B cell (primary cell): ENCODE measurements at regions of chr3 and their contacts with region 1.

Region 1: DNA sequence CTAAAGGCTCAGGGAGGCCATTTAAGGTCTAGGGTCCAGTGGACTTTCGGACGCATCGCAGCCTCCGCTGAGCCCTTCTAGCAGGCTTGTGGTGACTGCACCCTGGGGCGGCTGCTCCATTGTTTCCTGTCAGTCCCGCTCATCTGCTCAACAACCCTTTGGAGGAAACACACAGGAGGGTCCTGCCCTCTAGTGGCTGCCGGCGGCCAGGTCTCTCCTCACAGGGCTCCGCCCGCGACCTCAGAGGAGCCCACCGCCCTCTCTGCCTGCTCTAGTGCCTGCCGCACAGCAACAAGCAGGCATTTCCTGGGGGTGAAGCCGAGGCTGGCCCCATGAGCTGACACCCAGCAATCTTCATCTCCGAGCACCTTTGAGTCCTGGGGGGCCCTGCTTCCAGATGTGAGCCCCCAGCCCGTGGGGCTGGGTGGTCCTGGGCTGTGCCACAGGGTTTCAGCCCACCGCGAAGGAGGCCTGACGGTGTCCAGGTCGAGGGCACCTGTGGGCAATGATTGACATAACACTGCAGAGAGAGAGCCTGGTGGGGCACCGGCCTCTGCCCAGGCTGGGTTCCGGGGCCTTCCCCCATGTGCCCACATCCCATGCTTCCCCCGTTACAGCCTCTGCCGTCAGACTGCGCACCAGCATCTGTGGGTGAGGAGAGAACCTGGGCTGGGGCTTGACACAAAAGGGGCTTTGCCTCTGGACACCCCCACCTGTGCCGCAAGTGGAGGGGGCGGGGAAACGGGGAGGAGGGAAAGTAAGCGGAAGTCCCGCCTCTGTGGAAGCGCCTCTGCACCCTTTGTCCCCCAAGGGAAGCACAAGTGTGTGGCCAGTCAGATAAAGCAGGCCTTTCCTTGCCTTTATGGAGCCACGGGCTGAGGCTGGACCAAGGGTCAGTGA is 27.0 kb upstream of the SFMBT1 start:
- DNase-seq: peak; percentile 86
- ATAC-seq: peak; percentile 91
- H3K4me3 ChIP-seq: peak overlapping the region; percentile 50 to 91 (median 80)
- H3K4me3 Mint-ChIP-seq: peak overlapping the region; percentile 95
- H3K27ac ChIP-seq: peak overlapping the region; percentile 34 to 76
- H3K27ac Mint-ChIP-seq: peak overlapping the region; percentile 90
- H3K4me1 ChIP-seq: peaks cover 12 to 21% of the 10 kb centered on the region in 2 donors
- H3K4me1 Mint-ChIP-seq: peaks cover 17% of the 10 kb centered on the region
- H3K27me3 ChIP-seq: no peaks in the 10 kb centered on the region
- H3K27me3 Mint-ChIP-seq: no peaks in the 10 kb centered on the region
- CTCF ChIP-seq: peak; percentile 96

Region 2: GRCh38 chr3:52705688-52706686 is 366.9 kb before region 1 on chr3 and contains the starts of genes GLT8D1 and SPCS1:
- CTCF ChIA-PET with region 1: no interaction called
- POLR2A ChIA-PET with region 1: no interaction called
- intact Hi-C with region 1: loop called (anchors 1 kb)
- DNase-seq: peak; percentile 97
- ATAC-seq: peak; percentile 86
- H3K4me3 ChIP-seq: peak within 1 kb of the TSS; percentile 75 to 91 (median 82)
- H3K4me3 Mint-ChIP-seq: peak within 1 kb of the TSS; percentile 96
- H3K27ac ChIP-seq: peak within 1 kb of the TSS; percentile 66 to 95
- H3K27ac Mint-ChIP-seq: peak within 1 kb of the TSS; percentile 97
- H3K4me1 ChIP-seq: peaks cover 40 to 44% of the 10 kb centered on the region in 2 donors
- H3K4me1 Mint-ChIP-seq: peaks cover 46% of the 10 kb centered on the region
- H3K27me3 ChIP-seq: no peaks in the 10 kb centered on the region
- H3K27me3 Mint-ChIP-seq: no peaks in the 10 kb centered on the region
- CTCF ChIP-seq: no peak
- total RNA-seq, gene GLT8D1: 28.7 and 32.5 TPM in 2 replicates
- total RNA-seq, gene SPCS1: 54.3 and 64.5 TPM in 2 replicates

Region 3: DNA sequence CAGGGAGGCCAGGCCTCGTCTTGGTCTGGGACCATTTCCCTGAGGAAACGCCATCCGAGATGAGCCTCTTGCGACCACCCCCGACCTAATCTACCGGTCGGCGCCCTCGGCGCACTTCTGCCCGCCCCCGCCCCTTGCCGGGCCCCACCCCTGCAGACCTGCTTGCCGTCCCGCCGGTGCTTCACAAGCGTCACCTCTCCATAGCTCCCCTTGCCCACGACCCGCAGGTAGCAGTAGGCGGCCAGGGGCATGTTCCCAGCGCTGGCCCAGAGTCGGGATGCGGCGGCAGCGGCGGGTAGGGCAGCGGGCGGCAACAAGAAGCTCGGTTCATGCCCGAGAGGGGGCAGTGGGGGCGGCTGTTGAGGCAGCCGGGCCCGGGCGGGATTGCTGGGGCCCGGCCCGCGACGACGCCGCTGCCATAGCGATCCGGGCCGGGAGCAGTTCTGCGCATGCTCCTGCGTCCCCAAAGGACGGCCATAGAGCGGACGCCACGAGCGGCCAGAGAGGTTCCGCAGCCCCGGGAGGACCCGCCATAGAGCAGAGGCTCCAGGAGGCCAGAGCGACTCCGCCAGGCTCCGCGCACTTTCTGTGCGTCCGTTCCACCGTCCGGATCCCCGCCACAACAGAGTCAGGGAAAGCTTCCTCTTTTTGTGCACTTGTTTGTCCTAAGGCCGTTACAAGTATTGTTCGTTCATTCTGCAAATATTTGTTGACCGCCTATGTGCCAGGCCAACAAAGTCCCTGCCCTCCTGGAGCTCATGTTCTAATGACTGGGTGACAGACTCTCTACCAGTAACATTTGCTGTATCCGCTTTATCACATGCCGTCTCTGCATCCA is 302.2 kb before region 1 on chr3 and contains the start of gene NEK4:
- CTCF ChIA-PET with region 1: no interaction called
- POLR2A ChIA-PET with region 1: no interaction called
- intact Hi-C with region 1: loop called (anchors 1 kb)
- DNase-seq: peak; percentile 93
- ATAC-seq: peak; percentile 96
- H3K4me3 ChIP-seq: peak within 1 kb of the TSS; percentile 57 to 85 (median 70)
- H3K4me3 Mint-ChIP-seq: peak within 1 kb of the TSS; percentile 99
- H3K27ac ChIP-seq: peak within 1 kb of the TSS; percentile 71 to 89
- H3K27ac Mint-ChIP-seq: peak within 1 kb of the TSS; percentile 98
- H3K4me1 ChIP-seq: peaks cover 9 to 12% of the 10 kb centered on the region in 2 donors
- H3K4me1 Mint-ChIP-seq: peaks cover 18% of the 10 kb centered on the region
- H3K27me3 ChIP-seq: no peaks in the 10 kb centered on the region
- H3K27me3 Mint-ChIP-seq: no peaks in the 10 kb centered on the region
- CTCF ChIP-seq: peak; percentile 27
- total RNA-seq, gene NEK4: 33.8 and 38.4 TPM in 2 replicates

Region 4: DNA sequence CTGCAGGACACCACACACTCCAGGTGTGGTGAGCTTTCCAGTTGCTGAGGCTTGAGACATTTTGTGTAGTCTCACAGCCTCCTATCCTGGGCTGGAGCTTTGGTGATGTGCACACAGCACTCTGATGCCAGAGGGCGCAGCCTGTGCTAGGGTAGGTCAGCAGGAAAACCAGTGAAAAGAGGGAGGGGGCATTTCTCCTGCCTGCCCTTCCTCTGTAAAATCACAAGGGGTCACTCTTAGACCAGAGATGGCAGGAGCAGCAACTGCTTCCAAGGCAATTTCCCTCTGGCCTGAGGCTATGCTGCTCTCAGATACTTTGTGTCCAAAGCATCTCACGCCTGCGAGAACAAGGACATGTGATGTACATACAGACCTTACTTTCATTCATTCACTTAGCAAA is 221.6 kb before region 1 on chr3:
- CTCF ChIA-PET with region 1: interaction called, 11 read pairs
- POLR2A ChIA-PET with region 1: no interaction called
- intact Hi-C with region 1: loop called (anchors 1 kb)
- DNase-seq: peak; percentile 49
- ATAC-seq: peak; percentile 73
- H3K4me3 ChIP-seq: no peak overlapping the region
- H3K4me3 Mint-ChIP-seq: no peak overlapping the region
- H3K27ac ChIP-seq: no peak overlapping the region
- H3K27ac Mint-ChIP-seq: no peak overlapping the region
- H3K4me1 ChIP-seq: no peaks in the 10 kb centered on the region
- H3K4me1 Mint-ChIP-seq: no peaks in the 10 kb centered on the region
- H3K27me3 ChIP-seq: no peaks in the 10 kb centered on the region
- H3K27me3 Mint-ChIP-seq: no peaks in the 10 kb centered on the region
- CTCF ChIP-seq: peak; percentile 55

Region 5: GRCh38 chr3:52907497-52907896 is 165.4 kb before region 1 on chr3:
- CTCF ChIA-PET with region 1: interaction called, 14 read pairs
- POLR2A ChIA-PET with region 1: no interaction called
- intact Hi-C with region 1: loop called (anchors 1 kb)
- DNase-seq: no peak
- ATAC-seq: no peak
- H3K4me3 ChIP-seq: no peak overlapping the region
- H3K4me3 Mint-ChIP-seq: no peak overlapping the region
- H3K27ac ChIP-seq: no peak overlapping the region
- H3K27ac Mint-ChIP-seq: no peak overlapping the region
- H3K4me1 ChIP-seq: no peaks in the 10 kb centered on the region
- H3K4me1 Mint-ChIP-seq: no peaks in the 10 kb centered on the region
- H3K27me3 ChIP-seq: no peaks in the 10 kb centered on the region
- H3K27me3 Mint-ChIP-seq: no peaks in the 10 kb centered on the region
- CTCF ChIP-seq: peak; percentile 15

Region 6: DNA sequence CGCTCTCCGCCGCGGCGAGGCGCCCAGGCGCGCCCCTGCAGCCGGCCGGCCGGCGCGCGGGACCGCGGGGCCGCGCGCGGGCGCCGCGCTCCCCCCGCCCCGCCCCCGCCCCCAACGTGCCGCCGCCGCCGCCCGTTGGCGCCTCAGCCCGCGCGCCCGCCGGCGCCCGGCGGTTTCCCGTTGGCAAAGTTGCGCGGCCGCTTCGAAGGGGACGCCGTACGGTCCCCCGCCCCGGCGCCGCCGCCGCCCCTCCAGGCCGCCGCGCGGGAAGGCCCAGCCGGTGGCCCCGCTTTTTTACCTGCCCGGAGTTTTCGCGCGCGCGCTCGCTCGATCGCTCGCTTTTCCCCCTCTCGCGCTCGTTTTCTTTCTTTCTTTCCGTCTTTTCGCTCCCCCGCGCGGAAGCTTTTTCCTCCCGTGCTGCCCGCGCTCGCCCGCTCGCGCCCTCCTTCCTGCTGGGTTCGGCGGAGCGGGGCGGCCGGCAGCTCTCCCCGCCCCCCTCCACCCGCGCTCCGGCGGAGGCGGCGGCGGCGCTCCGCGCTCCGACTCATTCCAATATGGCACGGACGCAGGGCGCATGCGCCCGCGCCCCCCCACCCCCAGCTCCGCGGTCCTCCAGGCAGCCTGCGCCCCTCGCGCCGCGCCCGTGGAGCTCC is 27.3 kb before region 1 on chr3 and contains the start of gene SFMBT1:
- CTCF ChIA-PET with region 1: interaction called, 7 read pairs
- POLR2A ChIA-PET with region 1: no interaction called
- intact Hi-C with region 1: loop called (anchors 1 kb)
- DNase-seq: peak; percentile 92
- ATAC-seq: peak; percentile 51
- H3K4me3 ChIP-seq: peak within 1 kb of the TSS; percentile 41 to 94 (median 84)
- H3K4me3 Mint-ChIP-seq: peak within 1 kb of the TSS; percentile 98
- H3K27ac ChIP-seq: peak within 1 kb of the TSS; percentile 83 to 88
- H3K27ac Mint-ChIP-seq: peak within 1 kb of the TSS; percentile 99
- H3K4me1 ChIP-seq: peaks cover 19 to 30% of the 10 kb centered on the region in 2 donors
- H3K4me1 Mint-ChIP-seq: peaks cover 43% of the 10 kb centered on the region
- H3K27me3 ChIP-seq: no peaks in the 10 kb centered on the region
- H3K27me3 Mint-ChIP-seq: no peaks in the 10 kb centered on the region
- CTCF ChIP-seq: no peak
- total RNA-seq, gene SFMBT1: 55.8 and 60.3 TPM in 2 replicates

Region 7: DNA sequence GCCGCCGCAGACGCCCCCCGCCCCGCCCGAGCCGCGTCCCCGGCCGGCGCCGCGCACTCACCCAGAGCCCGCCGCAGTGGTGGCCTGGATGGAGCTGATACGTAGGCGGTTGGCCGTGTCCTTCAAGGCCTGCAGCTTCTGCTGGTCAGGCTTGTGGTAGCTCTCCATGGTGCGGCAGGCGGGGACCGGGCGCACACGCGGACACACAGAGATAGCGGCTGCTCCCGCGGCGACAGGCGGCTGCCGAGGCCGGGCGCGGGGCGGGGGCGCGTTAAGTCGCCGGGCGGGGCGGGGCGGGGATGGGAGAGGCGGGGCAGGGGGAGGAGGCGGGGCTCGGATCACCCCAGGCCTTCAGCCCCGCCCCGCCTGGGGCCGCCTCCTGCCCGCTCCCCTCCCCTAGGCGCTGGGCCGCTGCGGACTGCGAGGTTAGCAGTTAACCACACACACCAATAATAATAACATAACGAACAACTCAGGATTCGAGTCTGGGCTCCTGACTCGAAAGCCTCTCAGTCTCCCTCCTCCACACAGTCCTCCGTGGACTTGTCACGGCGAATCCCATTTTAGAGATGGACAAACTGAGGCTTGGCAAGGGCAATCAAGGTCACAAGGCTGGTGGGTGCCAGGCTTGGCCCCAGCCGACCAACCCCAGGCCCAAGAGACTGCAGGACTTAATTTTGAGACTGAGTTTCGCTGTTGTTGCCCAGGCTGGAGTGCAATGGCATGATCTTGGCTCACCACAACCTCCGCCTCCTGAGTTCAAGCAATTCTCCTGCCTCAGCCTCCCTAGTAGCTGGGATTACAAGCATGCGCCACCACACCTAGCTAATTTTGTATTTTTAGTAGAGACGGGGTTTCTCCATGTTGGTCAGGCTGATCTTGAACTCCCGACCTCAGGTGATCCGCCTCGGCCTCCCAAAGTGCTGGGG is 183.1 kb after region 1 on chr3 and contains the start of gene TKT:
- CTCF ChIA-PET with region 1: no interaction called
- POLR2A ChIA-PET with region 1: no interaction called
- intact Hi-C with region 1: loop called (anchors 2 kb)
- DNase-seq: peak; percentile 87
- ATAC-seq: peak; percentile 87
- H3K4me3 ChIP-seq: peak within 1 kb of the TSS; percentile 72 to 83 (median 75)
- H3K4me3 Mint-ChIP-seq: peak within 1 kb of the TSS; percentile 91
- H3K27ac ChIP-seq: peak within 1 kb of the TSS; percentile 50 to 63
- H3K27ac Mint-ChIP-seq: peak within 1 kb of the TSS; percentile 81
- H3K4me1 ChIP-seq: peaks cover 30 to 42% of the 10 kb centered on the region in 2 donors
- H3K4me1 Mint-ChIP-seq: peaks cover 36% of the 10 kb centered on the region
- H3K27me3 ChIP-seq: no peaks in the 10 kb centered on the region
- H3K27me3 Mint-ChIP-seq: no peaks in the 10 kb centered on the region
- CTCF ChIP-seq: no peak
- total RNA-seq, gene TKT: 81.0 and 85.8 TPM in 2 replicates

Region 8: DNA sequence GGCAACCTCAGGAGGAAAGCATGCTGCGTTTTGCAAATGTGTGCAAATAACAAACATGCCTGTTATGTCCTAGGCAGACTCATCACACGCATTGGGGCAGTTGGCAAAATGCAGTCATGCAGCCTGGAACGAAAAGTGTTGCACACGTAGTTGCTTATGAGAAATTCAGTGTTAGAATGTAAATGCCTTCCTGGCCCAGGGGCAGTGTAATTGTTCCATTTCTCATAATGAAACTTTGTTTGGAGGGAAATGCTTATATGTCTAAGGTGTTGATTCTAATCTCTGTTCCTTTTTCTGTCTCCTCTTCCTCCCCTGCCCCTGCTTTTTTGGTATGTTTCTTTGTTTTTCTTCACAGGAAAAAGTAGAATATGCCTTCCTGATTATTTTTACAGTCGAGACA is 577.5 kb after region 1 on chr3:
- CTCF ChIA-PET with region 1: no interaction called
- POLR2A ChIA-PET with region 1: no interaction called
- intact Hi-C with region 1: no loop called
- DNase-seq: no peak
- ATAC-seq: no peak
- H3K4me3 ChIP-seq: no peak overlapping the region
- H3K4me3 Mint-ChIP-seq: no peak overlapping the region
- H3K27ac ChIP-seq: no peak overlapping the region
- H3K27ac Mint-ChIP-seq: no peak overlapping the region
- H3K4me1 ChIP-seq: peaks cover 0 to 8% of the 10 kb centered on the region in 2 donors
- H3K4me1 Mint-ChIP-seq: peaks cover 14% of the 10 kb centered on the region
- H3K27me3 ChIP-seq: peaks cover 0 to 3% (median 0%) of the 10 kb centered on the region in 4 experiments
- H3K27me3 Mint-ChIP-seq: peaks cover 9% of the 10 kb centered on the region
- CTCF ChIP-seq: no peak